ENCODE measurements at regions of chr3 and their contacts with region 1.

Region 1: GRCh38 chr3:159322322-159322939 is 520.6 kb downstream of the MFSD1 start:
- DNase-seq: no peak
- H3K4me3 ChIP-seq: no peak overlapping the region
- CTCF ChIP-seq: peak; percentile 77

Region 2: GRCh38 chr3:159311400-159311799 is 11.0 kb before region 1 on chr3:
- CTCF ChIA-PET with region 1: interaction called, 11 read pairs
- POLR2A ChIA-PET with region 1: no interaction called
- DNase-seq: no peak
- H3K4me3 ChIP-seq: no peak overlapping the region
- CTCF ChIP-seq: no peak

Measured in AG04449 (cell line).